ENCODE measurements at regions of chr4 and their contacts with region 1.

Region 1: GRCh38 chr4:86497980-86498862 is 95.9 kb upstream of the PTPN13 start:
- DNase-seq: peak; percentile 47
- H3K4me3 ChIP-seq: no peak overlapping the region; a peak in 1 of 4 replicates
- H3K27ac ChIP-seq: no peak overlapping the region
- H3K4me1 ChIP-seq: peaks cover 3 to 20% of the 10 kb centered on the region in 2 experiments; a peak in 3 of 4 replicates
- H3K27me3 ChIP-seq: no peaks in the 10 kb centered on the region
- CTCF ChIP-seq: peak; percentile 93
- EP300 ChIP-seq: no peak
- RAD21 ChIP-seq: peak; percentile 88

Region 2: DNA sequence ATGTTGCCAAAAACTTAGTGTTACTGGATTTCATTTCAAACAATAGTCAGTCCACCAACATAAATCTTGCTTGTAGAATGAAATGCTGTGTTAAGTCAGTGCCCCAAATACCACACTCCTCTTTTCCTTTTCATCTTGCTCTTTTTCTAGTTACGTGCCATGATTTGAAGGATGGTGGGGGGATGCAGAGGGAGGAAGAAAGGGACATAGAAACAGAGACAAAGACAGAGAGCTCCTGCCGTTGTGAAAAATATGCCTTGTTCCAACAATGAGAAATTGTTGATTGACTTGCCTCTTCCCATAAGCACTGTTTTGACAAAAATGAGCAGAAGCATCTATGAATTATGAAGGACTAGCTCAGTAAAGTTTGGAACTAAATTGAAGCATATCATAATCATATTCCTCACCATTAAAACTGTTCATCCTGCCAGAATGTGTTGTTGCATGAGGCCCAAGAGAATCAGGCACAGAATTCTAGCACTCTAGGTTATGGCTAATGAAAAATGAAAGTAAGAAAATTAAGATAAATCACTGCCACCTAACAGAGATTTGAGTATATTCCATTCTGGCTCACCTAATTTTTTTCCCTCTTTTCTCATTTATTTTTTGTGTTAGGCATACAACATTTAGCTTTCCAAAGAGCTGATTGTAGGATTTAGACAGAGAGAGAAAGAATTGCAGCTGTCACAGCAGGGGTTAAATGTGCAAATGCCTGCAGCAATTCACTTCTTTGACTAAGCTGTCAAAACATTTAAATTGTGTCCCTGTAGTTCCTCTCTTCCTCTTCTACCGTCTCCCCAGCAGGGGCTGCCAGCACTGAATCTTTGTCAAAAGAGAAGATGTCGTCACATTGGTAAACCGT is 15.7 kb before region 1 on chr4:
- CTCF ChIA-PET with region 1: interaction called, 25 read pairs
- POLR2A ChIA-PET with region 1: no interaction called
- DNase-seq: peak; percentile 11
- H3K4me3 ChIP-seq: no peak overlapping the region
- H3K27ac ChIP-seq: no peak overlapping the region
- H3K4me1 ChIP-seq: peaks cover 0 to 2% of the 10 kb centered on the region in 2 experiments; a peak in 1 of 4 replicates
- H3K27me3 ChIP-seq: no peaks in the 10 kb centered on the region
- CTCF ChIP-seq: peak; percentile 25; the same call in 1 of the 2 replicates
- EP300 ChIP-seq: no peak
- RAD21 ChIP-seq: peak; percentile 10; the same call in 1 of the 2 replicates

Region 3: DNA sequence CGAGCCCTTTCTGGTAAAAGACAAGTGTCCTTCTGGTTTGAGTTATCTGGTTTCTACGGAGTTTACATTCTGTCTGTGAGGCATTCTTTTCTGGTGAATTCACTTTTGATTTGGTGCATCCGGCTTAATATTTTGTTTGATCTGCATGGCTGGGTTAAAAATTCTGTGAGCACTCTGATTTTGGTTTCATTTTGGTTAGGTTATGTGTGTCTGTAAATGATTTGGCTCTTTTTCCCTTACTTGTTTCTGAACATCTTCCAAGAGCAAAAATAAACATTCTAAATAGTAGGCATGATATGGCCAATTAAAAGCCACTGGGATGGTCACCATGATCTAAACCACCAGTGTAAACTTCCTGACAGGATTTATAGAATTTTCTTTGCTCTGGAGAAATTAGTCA is 10.2 kb after region 1 on chr4:
- CTCF ChIA-PET with region 1: interaction called, 83 read pairs
- POLR2A ChIA-PET with region 1: no interaction called
- DNase-seq: no peak
- H3K4me3 ChIP-seq: peak overlapping the region; percentile 25 to 30; a peak in 3 of 4 replicates
- H3K27ac ChIP-seq: peak overlapping the region; percentile 60 to 72; a peak in 3 of 4 replicates
- H3K4me1 ChIP-seq: no peaks in the 10 kb centered on the region; a peak in 2 of 4 replicates
- H3K27me3 ChIP-seq: no peaks in the 10 kb centered on the region
- CTCF ChIP-seq: no peak
- EP300 ChIP-seq: no peak
- RAD21 ChIP-seq: no peak

Region 4: DNA sequence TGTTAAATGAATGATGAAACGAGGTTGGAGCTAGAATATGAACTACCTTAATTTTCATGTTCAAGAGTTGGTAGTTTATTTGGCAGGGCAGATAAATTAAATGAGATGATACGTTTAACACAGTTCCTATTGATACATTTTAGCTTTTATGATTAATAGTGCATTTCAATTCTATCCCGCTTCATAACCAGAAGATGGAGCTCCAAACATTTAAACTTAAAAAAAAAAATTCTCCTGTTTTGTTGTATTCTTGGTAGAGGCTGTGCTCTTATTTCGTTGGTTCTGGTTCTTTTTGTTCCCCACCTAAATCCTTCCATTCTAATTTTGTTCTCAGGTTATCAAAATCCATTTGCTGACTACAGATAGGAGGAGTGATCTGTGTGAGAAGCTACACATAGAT is 24.1 kb after region 1 on chr4:
- CTCF ChIA-PET with region 1: interaction called, 72 read pairs
- POLR2A ChIA-PET with region 1: no interaction called
- DNase-seq: no peak
- H3K4me3 ChIP-seq: no peak overlapping the region
- H3K27ac ChIP-seq: no peak overlapping the region
- H3K4me1 ChIP-seq: no peaks in the 10 kb centered on the region
- H3K27me3 ChIP-seq: no peaks in the 10 kb centered on the region
- CTCF ChIP-seq: peak; percentile 52
- EP300 ChIP-seq: no peak
- RAD21 ChIP-seq: peak; percentile 55

Region 5: DNA sequence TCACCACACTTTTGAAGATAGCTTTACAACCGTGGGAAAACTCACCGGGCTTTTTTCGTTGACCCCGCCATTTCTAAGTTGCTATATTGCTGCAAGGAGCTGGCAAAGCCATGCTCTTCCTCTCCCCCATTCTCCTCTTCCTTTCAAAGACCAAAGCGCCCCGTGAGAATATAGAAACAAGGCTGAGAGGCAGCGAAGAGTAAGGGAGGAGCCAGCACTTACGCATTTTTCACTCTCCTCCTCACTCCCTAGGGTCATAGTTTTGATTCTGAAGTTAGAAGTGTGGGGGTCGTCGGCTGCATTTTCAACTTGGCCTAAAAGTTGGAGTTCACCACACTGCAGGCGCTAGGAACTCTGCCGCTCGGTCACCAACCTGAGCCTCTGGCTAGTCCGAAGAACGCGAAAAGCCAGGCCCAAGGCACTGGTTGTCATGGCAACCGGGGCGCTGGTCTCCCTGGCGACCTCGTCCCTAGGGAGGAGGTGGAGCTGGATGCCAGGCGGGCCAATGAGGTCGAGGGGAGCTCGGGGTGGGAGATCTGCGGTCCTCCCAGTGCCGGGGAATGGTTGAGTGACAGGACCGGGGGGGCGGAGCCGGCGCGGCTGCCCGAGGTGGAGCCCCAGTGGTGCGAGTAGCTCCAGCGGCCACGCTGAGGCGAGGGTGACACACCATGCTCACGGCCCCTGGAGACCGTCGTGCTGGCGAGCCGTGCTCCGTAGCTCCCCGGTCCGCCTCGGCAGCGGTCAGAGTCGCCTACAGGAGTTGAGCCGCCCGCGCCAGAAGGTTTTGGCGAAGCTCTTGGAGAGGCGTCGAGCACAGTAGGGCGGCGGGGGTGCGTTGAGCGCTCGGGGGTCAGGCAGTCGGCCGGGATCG is 95.7 kb after region 1 on chr4 and contains the start of gene PTPN13:
- CTCF ChIA-PET with region 1: interaction called, 18 read pairs
- POLR2A ChIA-PET with region 1: no interaction called
- DNase-seq: peak; percentile 97
- H3K4me3 ChIP-seq: peak within 1 kb of the TSS; percentile 72 to 77
- H3K27ac ChIP-seq: peak within 1 kb of the TSS; percentile 72 to 85
- H3K4me1 ChIP-seq: peaks cover 9 to 15% of the 10 kb centered on the region in 2 experiments
- H3K27me3 ChIP-seq: no peaks in the 10 kb centered on the region
- CTCF ChIP-seq: no peak; the same call in 1 of the 2 replicates
- EP300 ChIP-seq: no peak
- RAD21 ChIP-seq: peak; percentile 35
- polyA plus RNA-seq, gene PTPN13: 5.5 and 7.0 TPM in 2 replicates

Region 6: DNA sequence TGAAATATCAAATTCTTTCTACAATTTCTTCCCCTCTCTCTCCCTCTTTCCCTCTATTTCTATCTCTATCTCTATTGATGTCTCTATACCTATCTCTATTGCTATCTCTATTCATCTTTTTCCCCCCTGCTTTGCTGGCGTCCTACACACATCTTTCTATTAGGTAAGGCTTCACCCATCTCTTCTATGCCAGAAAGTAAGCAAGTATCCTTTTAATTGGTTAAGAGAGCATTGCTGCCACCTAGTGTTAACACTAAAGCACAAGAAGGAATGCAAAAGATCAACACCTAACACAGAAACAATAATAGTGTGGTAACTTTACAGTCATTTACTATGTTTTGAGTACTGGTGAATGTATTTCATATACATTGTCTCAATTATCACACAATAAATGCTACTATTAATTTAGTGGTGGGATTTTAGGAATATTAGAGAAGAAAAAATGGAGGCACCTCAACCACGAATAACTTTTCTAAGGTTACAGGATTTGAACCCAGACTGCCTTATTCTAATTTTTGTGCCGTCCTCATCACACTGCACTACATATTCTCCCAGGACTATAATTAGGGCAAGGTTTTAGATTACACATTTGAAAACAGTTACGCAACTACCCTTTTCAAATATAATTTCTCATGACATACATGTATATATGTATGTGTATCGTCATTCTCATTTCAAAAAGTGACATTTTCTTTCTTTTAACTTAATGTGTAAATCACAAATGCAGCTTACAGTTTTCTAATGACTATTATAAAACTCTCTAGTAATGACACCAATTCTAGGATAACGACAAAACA is 397.7 kb after region 1 on chr4:
- CTCF ChIA-PET with region 1: interaction called, 294 read pairs
- POLR2A ChIA-PET with region 1: no interaction called
- DNase-seq: peak; percentile 58
- H3K4me3 ChIP-seq: no peak overlapping the region; a peak in 1 of 4 replicates
- H3K27ac ChIP-seq: no peak overlapping the region; a peak in 1 of 4 replicates
- H3K4me1 ChIP-seq: peaks cover 3 to 8% of the 10 kb centered on the region in 2 experiments; a peak in 2 of 4 replicates
- H3K27me3 ChIP-seq: no peaks in the 10 kb centered on the region
- CTCF ChIP-seq: peak; percentile 92
- EP300 ChIP-seq: no peak
- RAD21 ChIP-seq: peak; percentile 94